Caco-2 (cell line): ENCODE measurements at regions of chr2 and their contacts with region 1.

Region 1: GRCh38 chr2:202375609-202376408 is at the start of gene BMPR2:
- DNase-seq: peak; percentile 92 to 96
- H3K4me3 ChIP-seq: peak within 1 kb of the TSS; percentile 96
- H3K4me3 Mint-ChIP-seq: peak within 1 kb of the TSS; percentile 84
- H3K27ac Mint-ChIP-seq: peak within 1 kb of the TSS; percentile 89
- H3K4me1 ChIP-seq: peaks cover 7% of the 10 kb centered on the region; the same call in 1 of the 2 replicates
- H3K4me1 Mint-ChIP-seq: peaks cover 11% of the 10 kb centered on the region
- H3K27me3 ChIP-seq: no peaks in the 10 kb centered on the region
- H3K27me3 Mint-ChIP-seq: no peaks in the 10 kb centered on the region
- CTCF ChIP-seq: no peak
- total RNA-seq, gene BMPR2: 27.2 and 28.1 TPM in 2 replicates

Region 2: DNA sequence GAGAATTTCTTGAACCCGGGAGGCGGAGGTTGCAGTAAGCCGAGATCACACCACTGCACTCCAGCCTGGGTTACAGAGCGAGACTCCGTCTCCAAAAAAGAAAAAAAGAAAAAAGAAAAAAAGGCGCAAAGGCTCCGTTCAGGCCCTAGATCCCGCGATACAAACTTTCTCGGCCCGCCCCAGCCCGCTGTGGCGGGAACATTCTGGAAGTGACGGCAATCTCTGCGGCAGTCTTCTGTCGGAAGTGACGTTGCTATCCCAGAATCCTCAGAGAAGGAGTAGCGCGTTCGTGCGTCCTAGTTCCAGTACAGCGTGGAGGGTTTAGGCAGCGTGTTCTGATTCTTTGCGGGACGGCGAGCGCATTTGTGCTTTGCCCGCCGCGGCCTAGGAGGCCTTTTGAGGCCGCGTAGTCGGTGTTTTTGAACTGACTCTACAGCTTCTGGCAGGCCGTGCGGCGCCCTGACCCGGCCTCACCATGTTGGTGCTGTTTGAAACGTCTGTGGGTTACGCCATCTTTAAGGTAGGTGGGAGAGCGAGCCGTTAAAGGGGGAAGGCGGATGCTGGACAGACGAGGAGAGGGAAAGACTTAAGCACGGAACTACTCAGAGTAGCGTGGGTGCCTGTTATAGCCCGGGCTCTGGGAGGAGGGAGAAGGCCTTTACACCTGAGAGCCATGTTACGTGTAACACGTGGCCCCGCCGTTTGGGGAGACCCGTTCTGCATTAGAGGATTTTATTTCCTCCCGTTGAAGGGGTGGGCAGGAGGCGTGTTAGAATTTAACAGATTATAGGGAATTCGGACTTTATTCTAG is 110.1 kb before region 1 on chr2 and contains the start of gene NOP58:
- CTCF ChIA-PET with region 1: no interaction called
- POLR2A ChIA-PET with region 1: no interaction called
- intact Hi-C with region 1: loop called (anchors 5 kb)
- DNase-seq: peak; percentile 95 to 96
- H3K4me3 ChIP-seq: peak within 1 kb of the TSS; percentile 92
- H3K4me3 Mint-ChIP-seq: no peak within 1 kb of the TSS
- H3K27ac Mint-ChIP-seq: no peak within 1 kb of the TSS
- H3K4me1 ChIP-seq: peaks cover 16% of the 10 kb centered on the region; the same call in 1 of the 2 replicates
- H3K4me1 Mint-ChIP-seq: no peaks in the 10 kb centered on the region
- H3K27me3 ChIP-seq: no peaks in the 10 kb centered on the region
- H3K27me3 Mint-ChIP-seq: no peaks in the 10 kb centered on the region
- CTCF ChIP-seq: no peak
- total RNA-seq, gene NOP58: 136 and 147 TPM in 2 replicates

Region 3: DNA sequence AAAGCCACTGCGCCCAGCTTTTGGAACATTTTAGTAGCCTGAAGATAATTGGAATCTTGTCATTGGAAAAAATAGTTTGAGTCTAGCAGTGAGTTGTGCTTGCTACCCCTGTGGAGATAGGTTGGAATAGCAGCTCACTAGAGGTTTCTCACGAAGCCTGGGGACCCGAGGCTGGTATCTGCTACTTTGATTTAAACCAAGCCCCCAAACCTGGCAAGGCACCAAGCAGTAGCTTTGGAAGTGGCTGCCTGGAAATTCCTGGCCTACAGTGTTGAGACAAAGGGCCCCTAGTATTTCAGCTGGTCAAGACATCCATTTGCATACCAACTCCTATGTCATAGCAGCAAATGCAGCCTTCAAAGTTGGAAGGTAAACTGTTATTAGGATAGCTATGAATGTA is 68.1 kb before region 1 on chr2:
- CTCF ChIA-PET with region 1: no interaction called
- POLR2A ChIA-PET with region 1: no interaction called
- intact Hi-C with region 1: loop called (anchors 5 kb)
- DNase-seq: no peak
- H3K4me3 ChIP-seq: no peak overlapping the region
- H3K4me3 Mint-ChIP-seq: no peak overlapping the region
- H3K27ac Mint-ChIP-seq: no peak overlapping the region
- H3K4me1 ChIP-seq: no peaks in the 10 kb centered on the region
- H3K4me1 Mint-ChIP-seq: no peaks in the 10 kb centered on the region
- H3K27me3 ChIP-seq: no peaks in the 10 kb centered on the region
- H3K27me3 Mint-ChIP-seq: no peaks in the 10 kb centered on the region
- CTCF ChIP-seq: no peak

Region 4: GRCh38 chr2:202344178-202344577 is 31.6 kb before region 1 on chr2:
- CTCF ChIA-PET with region 1: no interaction called
- POLR2A ChIA-PET with region 1: no interaction called
- intact Hi-C with region 1: no loop called
- DNase-seq: no peak
- H3K4me3 ChIP-seq: no peak overlapping the region
- H3K4me3 Mint-ChIP-seq: no peak overlapping the region
- H3K27ac Mint-ChIP-seq: no peak overlapping the region
- H3K4me1 ChIP-seq: no peaks in the 10 kb centered on the region
- H3K4me1 Mint-ChIP-seq: no peaks in the 10 kb centered on the region
- H3K27me3 ChIP-seq: no peaks in the 10 kb centered on the region
- H3K27me3 Mint-ChIP-seq: no peaks in the 10 kb centered on the region
- CTCF ChIP-seq: no peak

Region 5: DNA sequence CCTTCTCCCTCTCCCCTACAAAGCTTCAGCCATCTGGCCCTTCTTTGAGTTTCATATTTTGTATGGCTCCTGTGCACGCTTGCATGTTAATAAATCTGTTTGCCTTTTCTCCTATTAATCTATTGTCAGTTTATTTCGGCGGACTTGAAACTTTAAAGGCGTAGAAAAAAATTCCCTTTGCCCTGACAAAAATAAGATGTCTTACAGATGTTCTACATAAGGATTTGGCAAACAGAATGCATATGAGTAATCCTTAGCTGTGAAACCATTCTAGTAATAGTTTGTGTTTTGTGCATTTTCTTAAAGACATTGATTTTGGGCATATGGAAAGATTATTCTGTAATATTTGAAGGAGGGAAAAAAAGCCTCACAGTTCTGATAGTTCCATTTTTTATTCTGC is 14.7 kb before region 1 on chr2:
- CTCF ChIA-PET with region 1: no interaction called
- POLR2A ChIA-PET with region 1: interaction called, 3 read pairs
- intact Hi-C with region 1: loop called (anchors 1 kb)
- DNase-seq: no peak
- H3K4me3 ChIP-seq: no peak overlapping the region
- H3K4me3 Mint-ChIP-seq: no peak overlapping the region
- H3K27ac Mint-ChIP-seq: peak overlapping the region; percentile 54
- H3K4me1 ChIP-seq: peaks cover 24% of the 10 kb centered on the region
- H3K4me1 Mint-ChIP-seq: peaks cover 13% of the 10 kb centered on the region
- H3K27me3 ChIP-seq: no peaks in the 10 kb centered on the region
- H3K27me3 Mint-ChIP-seq: no peaks in the 10 kb centered on the region
- CTCF ChIP-seq: no peak

Region 6: GRCh38 chr2:202418511-202418910 is 42.7 kb after region 1 on chr2:
- CTCF ChIA-PET with region 1: no interaction called
- POLR2A ChIA-PET with region 1: no interaction called
- intact Hi-C with region 1: loop called (anchors 1 kb)
- DNase-seq: peak in 1 of 2 experiments; percentile 7
- H3K4me3 ChIP-seq: no peak overlapping the region
- H3K4me3 Mint-ChIP-seq: peak overlapping the region; percentile 2
- H3K27ac Mint-ChIP-seq: peak overlapping the region; percentile 23
- H3K4me1 ChIP-seq: peaks cover 28% of the 10 kb centered on the region
- H3K4me1 Mint-ChIP-seq: peaks cover 18% of the 10 kb centered on the region
- H3K27me3 ChIP-seq: no peaks in the 10 kb centered on the region
- H3K27me3 Mint-ChIP-seq: no peaks in the 10 kb centered on the region
- CTCF ChIP-seq: no peak

Region 7: DNA sequence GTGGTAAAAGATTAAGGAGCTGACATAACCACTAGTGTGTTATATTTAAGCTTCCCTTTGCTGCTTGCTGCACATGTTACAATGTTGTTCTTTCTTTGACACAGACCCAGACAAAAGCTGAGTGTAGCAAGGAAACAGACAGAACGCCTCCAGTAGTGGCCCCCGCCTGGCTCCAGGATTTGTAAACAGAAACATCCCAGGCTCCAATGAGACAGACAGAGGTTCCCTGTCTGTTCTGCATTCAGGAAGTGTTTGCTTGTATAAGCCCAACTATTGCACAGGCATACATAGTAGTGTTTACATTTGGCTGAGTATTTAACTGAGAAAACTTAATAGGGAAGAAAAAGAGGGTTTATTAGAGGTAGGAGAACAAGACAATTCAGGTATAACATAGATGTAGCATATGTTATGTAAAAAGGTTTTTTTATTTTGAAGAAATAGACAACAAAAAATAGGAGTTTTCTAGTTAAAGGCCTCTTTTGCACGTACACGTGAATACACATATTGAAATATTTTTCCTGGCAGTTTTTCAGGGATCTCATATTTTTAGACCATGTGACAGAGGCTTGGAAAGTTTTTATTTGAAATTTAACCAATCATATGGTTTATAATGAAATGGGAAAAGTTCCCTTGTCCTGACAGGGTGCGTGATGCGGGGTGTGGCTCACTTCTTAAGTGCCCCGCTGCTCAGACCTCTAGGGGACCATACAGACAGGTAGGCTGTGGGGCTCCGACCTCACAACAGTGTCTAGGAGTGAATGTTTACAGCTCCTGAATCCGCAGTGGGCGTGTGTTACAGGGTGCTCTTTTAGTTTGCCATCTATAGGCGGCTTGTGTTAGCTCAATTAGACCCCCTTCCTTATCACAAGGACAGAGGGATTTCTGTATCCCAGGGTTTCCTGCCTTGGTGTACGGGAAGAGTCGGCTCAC is 118.8 kb after region 1 on chr2:
- CTCF ChIA-PET with region 1: no interaction called
- POLR2A ChIA-PET with region 1: no interaction called
- intact Hi-C with region 1: loop called (anchors 5 kb)
- DNase-seq: peak in 1 of 2 experiments; percentile 21
- H3K4me3 ChIP-seq: no peak overlapping the region
- H3K4me3 Mint-ChIP-seq: no peak overlapping the region
- H3K27ac Mint-ChIP-seq: no peak overlapping the region
- H3K4me1 ChIP-seq: no peaks in the 10 kb centered on the region; the same call in 1 of the 2 replicates
- H3K4me1 Mint-ChIP-seq: no peaks in the 10 kb centered on the region
- H3K27me3 ChIP-seq: no peaks in the 10 kb centered on the region
- H3K27me3 Mint-ChIP-seq: no peaks in the 10 kb centered on the region
- CTCF ChIP-seq: no peak